CD8-positive, alpha-beta T cell (primary cell): ENCODE measurements at regions of chr10 and their contacts with region 1.

Region 1: DNA sequence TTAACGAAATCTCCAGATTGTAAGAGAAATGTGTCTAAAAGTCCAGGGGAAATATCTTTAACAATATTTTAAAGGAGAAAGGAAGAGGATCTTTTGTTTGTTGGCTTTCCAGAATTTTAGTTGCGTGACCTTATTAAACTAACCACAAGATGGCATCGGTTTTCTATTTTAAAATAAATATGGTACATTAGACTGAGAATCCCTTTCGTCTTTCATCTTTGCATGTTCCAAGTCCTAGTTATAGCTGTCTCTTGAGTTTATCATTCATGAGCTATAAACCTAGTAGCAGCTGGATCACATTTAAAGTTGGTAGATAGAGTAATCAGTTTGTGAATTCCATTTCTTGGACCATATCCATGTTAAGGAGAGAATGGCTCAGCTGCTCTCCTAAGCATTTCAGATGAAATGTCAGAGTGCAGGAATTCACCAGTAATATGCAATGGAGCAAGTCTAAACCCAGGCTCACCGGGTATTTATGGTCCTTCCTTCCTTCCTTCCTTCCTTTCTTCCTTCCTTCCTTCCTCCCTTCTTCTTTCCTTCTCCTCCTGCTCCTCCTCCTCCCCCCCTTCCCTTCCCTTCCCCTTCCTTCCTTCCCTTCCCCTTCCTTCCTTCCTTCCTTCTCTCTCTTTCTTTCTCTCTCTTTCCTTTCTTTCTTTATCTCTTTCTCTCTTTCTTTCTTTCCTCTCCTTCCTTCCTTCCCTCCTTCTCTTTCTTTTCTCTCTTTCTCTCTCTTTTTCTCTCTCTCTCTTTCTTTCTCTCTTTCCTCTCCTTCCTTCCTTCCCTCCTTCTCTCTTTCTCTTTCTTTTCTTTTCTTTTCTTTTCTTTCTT is 57.8 kb upstream of the RAB18 start:
- DNase-seq: peak in 2 of 9 experiments; percentile 38 to 60
- ATAC-seq: peak; percentile 46
- H3K4me3 ChIP-seq: no peak overlapping the region
- H3K4me3 Mint-ChIP-seq: no peak overlapping the region
- H3K27ac ChIP-seq: no peak overlapping the region
- H3K27ac Mint-ChIP-seq: no peak overlapping the region
- H3K4me1 ChIP-seq: peaks cover 9% of the 10 kb centered on the region
- H3K4me1 Mint-ChIP-seq: peaks cover 21% of the 10 kb centered on the region
- H3K27me3 ChIP-seq: no peaks in the 10 kb centered on the region
- H3K27me3 Mint-ChIP-seq: no peaks in the 10 kb centered on the region
- CTCF ChIP-seq: peak; percentile 61

Region 2: GRCh38 chr10:27542812-27543211 is 96.5 kb after region 1 on chr10:
- CTCF ChIA-PET with region 1: interaction called, 3 read pairs
- POLR2A ChIA-PET with region 1: no interaction called
- intact Hi-C with region 1: loop called in 1 of 2 experiments (anchors 5 kb)
- DNase-seq: no peak
- ATAC-seq: no peak
- H3K4me3 ChIP-seq: no peak overlapping the region
- H3K4me3 Mint-ChIP-seq: no peak overlapping the region
- H3K27ac ChIP-seq: peak overlapping the region in 1 of 2 experiments; percentile 74
- H3K27ac Mint-ChIP-seq: peak overlapping the region; percentile 64
- H3K4me1 ChIP-seq: peaks cover 21% of the 10 kb centered on the region
- H3K4me1 Mint-ChIP-seq: peaks cover 47% of the 10 kb centered on the region
- H3K27me3 ChIP-seq: no peaks in the 10 kb centered on the region
- H3K27me3 Mint-ChIP-seq: no peaks in the 10 kb centered on the region
- CTCF ChIP-seq: no peak

Region 3: GRCh38 chr10:27661514-27662286 is 215.4 kb after region 1 on chr10:
- CTCF ChIA-PET with region 1: interaction called, 18 read pairs
- POLR2A ChIA-PET with region 1: no interaction called
- intact Hi-C with region 1: loop called (anchors 1 kb)
- DNase-seq: no peak
- ATAC-seq: no peak
- H3K4me3 ChIP-seq: no peak overlapping the region
- H3K4me3 Mint-ChIP-seq: no peak overlapping the region
- H3K27ac ChIP-seq: no peak overlapping the region
- H3K27ac Mint-ChIP-seq: no peak overlapping the region
- H3K4me1 ChIP-seq: no peaks in the 10 kb centered on the region
- H3K4me1 Mint-ChIP-seq: no peaks in the 10 kb centered on the region
- H3K27me3 ChIP-seq: peaks cover 0 to 5% of the 10 kb centered on the region in 2 experiments
- H3K27me3 Mint-ChIP-seq: peaks cover 43% of the 10 kb centered on the region
- CTCF ChIP-seq: no peak

Region 4: GRCh38 chr10:27742195-27743011 is 296.1 kb after region 1 on chr10:
- CTCF ChIA-PET with region 1: no interaction called
- POLR2A ChIA-PET with region 1: no interaction called
- intact Hi-C with region 1: loop called in 1 of 2 experiments (anchors 2 kb)
- DNase-seq: peak; percentile 55 to 85 (median 78)
- ATAC-seq: peak; percentile 82
- H3K4me3 ChIP-seq: peak overlapping the region; percentile 42 to 80
- H3K4me3 Mint-ChIP-seq: peak overlapping the region; percentile 87
- H3K27ac ChIP-seq: no peak overlapping the region
- H3K27ac Mint-ChIP-seq: no peak overlapping the region
- H3K4me1 ChIP-seq: peaks cover 57% of the 10 kb centered on the region
- H3K4me1 Mint-ChIP-seq: peaks cover 43% of the 10 kb centered on the region
- H3K27me3 ChIP-seq: peaks cover 53 to 65% of the 10 kb centered on the region in 2 experiments
- H3K27me3 Mint-ChIP-seq: peaks cover 57% of the 10 kb centered on the region
- CTCF ChIP-seq: peak; percentile 78

Region 5: DNA sequence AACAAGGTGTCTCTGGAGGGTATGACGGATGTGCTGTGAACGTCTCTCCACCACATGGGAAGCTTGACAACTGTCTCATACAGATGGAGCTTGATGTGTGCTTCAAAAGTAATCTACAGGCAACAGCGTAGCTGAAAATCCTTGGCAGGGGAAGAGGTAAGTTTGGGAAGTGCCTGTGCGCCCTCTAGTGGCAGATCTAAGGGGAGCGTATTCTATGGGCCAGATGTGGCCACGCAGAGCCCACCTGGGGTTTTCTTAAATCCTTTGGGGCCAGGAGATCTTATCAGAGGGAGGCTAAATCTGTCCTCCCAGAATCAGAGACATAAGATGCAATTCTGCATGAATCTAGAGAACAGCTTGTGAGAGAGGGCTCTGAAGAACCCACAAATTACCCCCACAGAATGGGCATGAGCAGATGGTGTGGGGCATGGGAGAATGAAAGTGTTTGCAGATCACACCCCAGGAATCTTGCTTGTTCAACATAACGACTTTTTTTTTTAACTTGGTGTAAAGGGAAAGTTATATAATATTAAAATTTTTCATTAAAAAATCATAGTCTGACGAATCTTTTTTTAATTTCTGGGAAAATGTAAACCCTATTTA is 947.8 kb after region 1 on chr10:
- CTCF ChIA-PET with region 1: interaction called, 3 read pairs
- POLR2A ChIA-PET with region 1: no interaction called
- intact Hi-C with region 1: loop called (anchors 5 to 10 kb)
- DNase-seq: peak; percentile 26 to 79 (median 63)
- ATAC-seq: peak; percentile 74
- H3K4me3 ChIP-seq: no peak overlapping the region
- H3K4me3 Mint-ChIP-seq: no peak overlapping the region
- H3K27ac ChIP-seq: no peak overlapping the region
- H3K27ac Mint-ChIP-seq: no peak overlapping the region
- H3K4me1 ChIP-seq: no peaks in the 10 kb centered on the region
- H3K4me1 Mint-ChIP-seq: peaks cover 4% of the 10 kb centered on the region
- H3K27me3 ChIP-seq: no peaks in the 10 kb centered on the region
- H3K27me3 Mint-ChIP-seq: peaks cover 15% of the 10 kb centered on the region
- CTCF ChIP-seq: peak; percentile 99

Region 6: DNA sequence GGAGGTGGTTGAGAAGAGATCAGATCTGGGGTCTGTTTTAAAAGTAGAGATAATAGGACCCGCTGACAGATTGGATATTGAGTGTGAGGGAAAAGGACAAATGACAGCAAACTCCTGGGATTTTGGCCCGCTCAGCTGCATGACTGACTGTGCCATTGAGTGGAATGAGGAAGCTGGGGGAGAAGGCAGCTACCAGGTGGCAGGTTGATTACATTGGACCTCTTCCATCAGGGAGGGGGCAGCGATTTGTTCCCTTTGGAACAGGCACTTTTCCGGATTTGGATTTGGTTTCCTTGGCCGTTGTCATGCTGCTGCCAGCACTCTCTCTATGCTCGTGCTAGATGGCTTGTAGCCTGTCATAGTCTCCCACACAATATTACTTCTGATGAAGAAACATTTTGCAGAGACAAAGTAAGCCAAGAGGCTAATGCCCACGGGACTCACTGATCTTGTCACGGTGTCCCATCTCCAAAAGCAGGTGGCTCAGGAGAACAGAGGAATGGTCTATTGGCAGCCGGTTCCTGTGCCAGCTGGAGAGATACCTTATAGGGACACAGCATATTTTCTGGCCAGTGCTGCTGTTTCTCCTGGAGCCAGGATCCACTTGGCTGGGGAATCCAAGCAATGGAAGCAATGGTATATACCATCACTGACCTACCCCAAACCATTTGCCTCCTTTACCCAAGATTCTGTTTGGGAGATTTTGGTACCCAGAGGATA is 1017.5 kb after region 1 on chr10:
- CTCF ChIA-PET with region 1: no interaction called
- POLR2A ChIA-PET with region 1: no interaction called
- intact Hi-C with region 1: no loop called
- DNase-seq: peak in 1 of 9 experiments; percentile 13
- ATAC-seq: no peak
- H3K4me3 ChIP-seq: no peak overlapping the region
- H3K4me3 Mint-ChIP-seq: no peak overlapping the region
- H3K27ac ChIP-seq: no peak overlapping the region
- H3K27ac Mint-ChIP-seq: no peak overlapping the region
- H3K4me1 ChIP-seq: no peaks in the 10 kb centered on the region
- H3K4me1 Mint-ChIP-seq: no peaks in the 10 kb centered on the region
- H3K27me3 ChIP-seq: no peaks in the 10 kb centered on the region
- H3K27me3 Mint-ChIP-seq: peaks cover 8% of the 10 kb centered on the region
- CTCF ChIP-seq: no peak